ENCODE measurements at regions of chr5 and their contacts with region 1.

Region 1: GRCh38 chr5:38468978-38469706 is 87.3 kb downstream of the LIFR start:
- DNase-seq: no peak
- H3K4me3 ChIP-seq: no peak overlapping the region
- H3K27ac ChIP-seq: no peak overlapping the region
- H3K4me1 ChIP-seq: no peaks in the 10 kb centered on the region
- H3K27me3 ChIP-seq: no peaks in the 10 kb centered on the region
- CTCF ChIP-seq: no peak

Region 2: DNA sequence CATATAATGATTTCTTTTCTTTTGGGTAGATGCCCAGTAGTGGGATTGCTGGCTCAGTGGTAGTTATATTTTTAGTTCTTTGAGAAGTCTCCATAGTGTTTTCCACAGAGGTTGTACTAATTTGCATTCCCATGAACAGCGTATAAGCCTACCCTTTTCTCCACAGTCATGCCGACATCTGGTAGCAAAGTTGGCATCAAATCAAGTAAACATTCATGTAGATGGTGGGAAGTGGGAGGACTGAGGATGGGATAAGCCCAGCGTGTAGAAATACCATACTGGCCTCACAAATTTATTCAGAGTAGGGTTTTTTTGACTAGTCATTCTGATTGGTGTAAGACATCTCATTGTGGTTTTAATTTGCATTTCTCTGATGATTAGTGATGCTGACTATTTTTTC is 95.4 kb before region 1 on chr5:
- CTCF ChIA-PET with region 1: no interaction called
- POLR2A ChIA-PET with region 1: interaction called, 11 read pairs
- intact Hi-C with region 1: no loop called
- DNase-seq: no peak
- H3K4me3 ChIP-seq: no peak overlapping the region
- H3K27ac ChIP-seq: no peak overlapping the region
- H3K4me1 ChIP-seq: no peaks in the 10 kb centered on the region
- H3K27me3 ChIP-seq: peaks cover 98% of the 10 kb centered on the region
- CTCF ChIP-seq: no peak

Region 3: GRCh38 chr5:39148983-39149534 is 679.9 kb after region 1 on chr5:
- CTCF ChIA-PET with region 1: no interaction called
- POLR2A ChIA-PET with region 1: no interaction called
- intact Hi-C with region 1: no loop called
- DNase-seq: no peak
- H3K4me3 ChIP-seq: no peak overlapping the region
- H3K27ac ChIP-seq: no peak overlapping the region; the same call in 1 of the 2 replicates
- H3K4me1 ChIP-seq: peaks cover 6% of the 10 kb centered on the region
- H3K27me3 ChIP-seq: no peaks in the 10 kb centered on the region
- CTCF ChIP-seq: peak; percentile 76